ENCODE measurements at regions of chr20 and their contacts with region 1.

Region 1: GRCh38 chr20:26308961-26309360 is 612.3 kb upstream of the ZNF337 start:
- DNase-seq: no peak
- ATAC-seq: no peak
- H3K4me3 Mint-ChIP-seq: no peak overlapping the region
- H3K27ac Mint-ChIP-seq: peak overlapping the region; percentile 78
- H3K4me1 Mint-ChIP-seq: peaks cover 56% of the 10 kb centered on the region
- H3K27me3 Mint-ChIP-seq: no peaks in the 10 kb centered on the region

Region 2: GRCh38 chr20:26243731-26244130 is 65.2 kb before region 1 on chr20:
- CTCF ChIA-PET with region 1: no interaction called
- POLR2A ChIA-PET with region 1: no interaction called
- intact Hi-C with region 1: no loop called
- DNase-seq: no peak
- ATAC-seq: no peak
- H3K4me3 Mint-ChIP-seq: no peak overlapping the region
- H3K27ac Mint-ChIP-seq: no peak overlapping the region
- H3K4me1 Mint-ChIP-seq: no peaks in the 10 kb centered on the region
- H3K27me3 Mint-ChIP-seq: no peaks in the 10 kb centered on the region

Region 3: DNA sequence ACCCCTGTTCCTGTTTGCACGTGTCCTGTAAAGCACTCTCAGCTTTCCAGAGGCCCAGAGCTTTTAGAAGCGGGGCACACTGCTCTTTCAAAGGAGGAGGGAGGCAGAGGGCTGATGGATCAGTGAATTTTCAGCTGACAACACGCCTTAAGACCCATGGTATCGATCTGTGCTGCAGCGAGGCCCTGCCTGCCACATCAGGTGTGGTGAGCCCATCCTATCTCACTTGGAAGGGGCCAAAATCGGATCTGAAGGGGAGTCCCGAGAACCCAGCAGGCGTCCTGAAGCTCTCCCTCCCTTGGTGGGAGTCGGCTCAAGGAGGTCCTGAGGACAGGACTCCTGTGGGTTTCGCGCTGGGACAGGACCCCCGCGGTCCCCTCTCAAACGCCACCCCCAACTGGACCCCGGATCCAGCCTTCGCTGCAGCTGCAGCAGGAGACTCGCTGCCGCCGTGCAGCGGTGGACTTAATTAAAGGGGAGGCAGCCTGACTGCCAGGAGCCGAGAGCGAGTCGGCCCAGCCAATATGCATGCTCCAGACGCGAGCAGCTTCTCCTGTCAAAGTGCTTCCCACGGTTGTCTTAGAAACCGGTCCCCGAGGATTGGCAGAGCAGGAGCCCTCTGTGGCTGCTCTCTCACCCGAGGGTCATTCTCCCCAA is 32.3 kb before region 1 on chr20:
- CTCF ChIA-PET with region 1: no interaction called
- POLR2A ChIA-PET with region 1: no interaction called
- intact Hi-C with region 1: loop called in 1 of 2 experiments (anchors 2 kb)
- DNase-seq: peak; percentile 6
- ATAC-seq: no peak
- H3K4me3 Mint-ChIP-seq: no peak overlapping the region
- H3K27ac Mint-ChIP-seq: no peak overlapping the region
- H3K4me1 Mint-ChIP-seq: peaks cover 35% of the 10 kb centered on the region
- H3K27me3 Mint-ChIP-seq: no peaks in the 10 kb centered on the region

Measured in activated CD4-positive, alpha-beta T cell treated with anti-CD3 and anti-CD28 coated beads for 36 hours (primary cell).